Mammary epithelial cell (primary cell): ENCODE measurements at regions of chr15 and their contacts with region 1.

Region 1: DNA sequence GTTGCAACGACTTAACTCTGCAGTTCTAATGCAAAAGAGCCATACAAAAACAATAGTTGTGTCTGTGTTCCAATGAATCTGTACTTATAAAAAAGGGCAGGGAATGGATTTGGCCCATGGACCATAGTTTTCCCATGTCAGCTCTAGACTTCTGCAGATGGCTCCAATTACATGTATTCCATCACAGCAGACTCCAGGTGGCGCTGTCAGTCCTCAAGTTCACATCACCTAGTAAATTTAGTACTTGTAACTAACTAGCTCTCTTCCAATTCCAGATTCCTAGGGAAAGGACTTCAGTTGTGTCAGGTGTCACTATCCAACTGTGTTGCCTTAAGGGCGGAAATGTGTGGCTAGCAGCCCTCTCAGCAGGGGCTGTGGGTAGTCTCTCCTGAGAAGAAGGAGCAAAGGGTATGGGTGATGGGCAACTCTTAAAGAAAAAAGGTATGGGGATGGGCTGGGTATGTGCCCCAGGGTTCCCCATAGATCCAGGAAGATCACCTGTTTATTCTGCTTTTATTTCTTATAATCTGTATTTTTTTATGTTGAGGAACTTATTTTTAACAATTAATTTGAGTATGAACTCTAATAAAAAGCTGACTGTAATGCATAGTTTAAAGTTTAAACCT is 36.2 kb downstream of the BBS4 start:
- DNase-seq: peak; percentile 41
- H3K4me3 ChIP-seq: no peak overlapping the region
- H3K27ac ChIP-seq: no peak overlapping the region
- H3K4me1 ChIP-seq: no peaks in the 10 kb centered on the region
- H3K27me3 ChIP-seq: no peaks in the 10 kb centered on the region
- CTCF ChIP-seq: peak; percentile 78 to 86

Region 2: GRCh38 chr15:72783563-72784237 is 61.5 kb after region 1 on chr15 and contains the start of gene ADPGK:
- CTCF ChIA-PET with region 1: no interaction called
- dilution Hi-C with region 1: no loop called
- in situ Hi-C with region 1: no loop called
- intact Hi-C with region 1: loop called (anchors 5 kb)
- DNase-seq: peak; percentile 95
- H3K4me3 ChIP-seq: peak within 1 kb of the TSS; percentile 94 to 97 (median 95)
- H3K27ac ChIP-seq: peak within 1 kb of the TSS; percentile 82
- H3K4me1 ChIP-seq: peaks cover 16% of the 10 kb centered on the region
- H3K27me3 ChIP-seq: no peaks in the 10 kb centered on the region
- CTCF ChIP-seq: no peak
- total RNA-seq, gene ADPGK: 39.7 to 46.9 TPM

Region 3: GRCh38 chr15:72892986-72893385 is 170.8 kb after region 1 on chr15:
- CTCF ChIA-PET with region 1: no interaction called
- dilution Hi-C with region 1: no loop called
- in situ Hi-C with region 1: no loop called
- intact Hi-C with region 1: no loop called
- DNase-seq: no peak
- H3K4me3 ChIP-seq: no peak overlapping the region
- H3K27ac ChIP-seq: no peak overlapping the region
- H3K4me1 ChIP-seq: no peaks in the 10 kb centered on the region
- H3K27me3 ChIP-seq: no peaks in the 10 kb centered on the region
- CTCF ChIP-seq: no peak